ENCODE measurements at regions of chr2 and their contacts with region 1.

Region 1: GRCh38 chr2:217090024-217090473 is 230.2 kb upstream of the TNP1 start:
- DNase-seq: no peak
- H3K4me3 Mint-ChIP-seq: peak overlapping the region; percentile 40
- H3K27ac Mint-ChIP-seq: peak overlapping the region; percentile 26
- H3K4me1 Mint-ChIP-seq: peaks cover 54% of the 10 kb centered on the region
- H3K27me3 Mint-ChIP-seq: peaks cover 9% of the 10 kb centered on the region

Region 2: DNA sequence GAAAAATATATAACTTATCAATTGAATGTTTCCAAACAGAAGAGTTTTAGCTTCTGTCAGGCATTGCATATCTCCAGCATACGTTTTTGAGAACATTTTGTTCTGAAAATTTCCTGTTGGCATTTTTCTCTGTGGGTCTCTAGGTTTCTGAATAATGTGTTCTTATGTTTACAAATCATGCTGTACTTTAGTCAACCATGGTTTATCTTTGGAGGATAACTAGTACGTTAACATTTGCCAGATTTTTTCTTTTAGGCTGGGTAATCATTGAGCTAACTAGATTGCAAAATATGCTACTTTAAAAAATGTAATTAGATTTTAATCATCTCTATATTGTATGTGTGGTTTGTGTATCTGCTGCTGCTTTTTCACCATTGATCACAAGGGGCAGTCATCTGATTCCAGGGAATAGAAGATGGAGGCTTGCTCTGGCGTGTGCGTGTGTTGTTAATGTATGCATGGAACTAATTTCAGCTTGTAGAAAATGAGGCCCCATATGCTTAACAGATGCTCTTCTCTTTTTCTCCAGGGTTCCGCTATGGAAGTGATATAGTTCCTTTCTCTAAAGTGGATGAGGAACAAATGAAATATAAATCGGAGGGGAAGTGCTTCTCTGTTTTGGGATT is 959.6 kb before region 1 on chr2:
- intact Hi-C with region 1: no loop called
- DNase-seq: no peak
- H3K4me3 Mint-ChIP-seq: no peak overlapping the region
- H3K27ac Mint-ChIP-seq: peak overlapping the region; percentile 31
- H3K4me1 Mint-ChIP-seq: peaks cover 59% of the 10 kb centered on the region
- H3K27me3 Mint-ChIP-seq: no peaks in the 10 kb centered on the region

Region 3: DNA sequence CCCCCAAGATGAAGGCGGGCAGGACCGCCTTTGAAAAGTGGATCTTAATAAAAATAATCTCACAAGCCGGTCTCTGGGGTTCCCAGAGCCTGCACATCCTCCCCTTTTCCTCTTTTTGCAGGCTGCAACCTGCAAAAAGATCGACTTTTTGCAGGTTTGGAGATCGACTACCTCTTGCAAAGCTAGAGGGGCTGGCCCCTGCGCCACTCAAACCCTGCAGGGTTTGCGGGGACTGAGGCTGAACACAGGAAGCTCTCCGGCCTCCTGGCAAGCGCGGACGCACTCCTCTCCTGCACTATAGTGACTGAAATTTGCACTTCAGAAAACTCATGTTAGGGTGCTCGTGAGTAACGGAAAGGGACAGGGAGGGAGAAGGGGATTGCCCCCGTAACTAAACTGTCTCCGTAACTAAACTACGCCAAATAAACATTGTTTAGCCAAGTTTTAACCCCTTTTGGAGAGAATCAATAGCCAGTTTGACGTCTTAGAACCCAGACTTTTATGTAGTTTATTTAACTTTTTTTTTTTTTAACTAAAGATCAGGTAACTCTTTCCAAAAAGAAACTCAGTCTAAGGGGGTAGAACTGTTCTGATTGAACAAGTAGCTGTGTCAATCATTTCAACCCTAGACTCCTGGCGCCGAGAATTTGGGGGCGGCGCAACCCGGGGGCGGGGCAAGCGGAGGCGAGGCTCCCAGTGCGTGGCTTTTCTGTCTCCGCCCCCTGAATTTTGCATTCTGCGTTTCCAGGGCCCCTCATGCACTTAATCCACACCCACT is 397.2 kb before region 1 on chr2:
- intact Hi-C with region 1: loop called (anchors 5 kb)
- DNase-seq: peak; percentile 65
- H3K4me3 Mint-ChIP-seq: peak overlapping the region; percentile 83
- H3K27ac Mint-ChIP-seq: peak overlapping the region; percentile 68
- H3K4me1 Mint-ChIP-seq: peaks cover 25% of the 10 kb centered on the region
- H3K27me3 Mint-ChIP-seq: peaks cover 66% of the 10 kb centered on the region

Region 4: GRCh38 chr2:216857131-216857550 is 232.9 kb before region 1 on chr2:
- intact Hi-C with region 1: loop called (anchors 1 kb)
- DNase-seq: peak; percentile 29
- H3K4me3 Mint-ChIP-seq: no peak overlapping the region
- H3K27ac Mint-ChIP-seq: peak overlapping the region; percentile 88
- H3K4me1 Mint-ChIP-seq: peaks cover 45% of the 10 kb centered on the region
- H3K27me3 Mint-ChIP-seq: no peaks in the 10 kb centered on the region

Region 5: DNA sequence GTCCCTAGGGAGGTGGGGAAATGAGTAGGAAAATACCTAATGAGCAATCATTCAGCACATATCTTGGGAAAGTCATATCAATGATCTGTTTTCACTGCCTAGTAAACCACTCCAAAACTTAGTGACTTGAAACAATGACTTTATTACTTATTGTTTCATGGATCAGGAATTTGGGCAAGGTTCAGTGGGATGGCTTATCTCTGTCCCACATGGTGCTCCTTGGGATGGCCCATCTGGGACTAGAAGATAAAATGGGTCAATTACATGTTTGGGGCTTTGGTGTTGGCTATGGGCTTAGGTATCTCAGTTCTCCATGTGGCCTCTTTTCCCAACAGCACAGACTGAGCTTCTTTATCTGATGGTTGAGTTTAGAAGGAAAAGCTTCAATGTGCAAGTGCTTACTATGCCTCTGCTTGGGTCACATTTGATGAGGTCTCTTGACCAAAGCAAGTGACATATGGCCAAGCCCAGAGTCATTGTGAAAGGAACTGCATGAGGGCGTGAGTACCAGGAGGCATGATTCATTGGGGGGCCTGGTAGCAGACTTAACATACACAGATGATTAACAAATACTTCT is 12.1 kb before region 1 on chr2:
- intact Hi-C with region 1: loop called (anchors 1 kb)
- DNase-seq: no peak
- H3K4me3 Mint-ChIP-seq: no peak overlapping the region
- H3K27ac Mint-ChIP-seq: no peak overlapping the region
- H3K4me1 Mint-ChIP-seq: peaks cover 6% of the 10 kb centered on the region
- H3K27me3 Mint-ChIP-seq: peaks cover 10% of the 10 kb centered on the region

Region 6: GRCh38 chr2:217105733-217106649 is 15.9 kb after region 1 on chr2:
- intact Hi-C with region 1: loop called (anchors 2 kb)
- DNase-seq: no peak
- H3K4me3 Mint-ChIP-seq: no peak overlapping the region
- H3K27ac Mint-ChIP-seq: no peak overlapping the region
- H3K4me1 Mint-ChIP-seq: peaks cover 19% of the 10 kb centered on the region
- H3K27me3 Mint-ChIP-seq: peaks cover 13% of the 10 kb centered on the region

Region 7: GRCh38 chr2:217186668-217187159 is 96.7 kb after region 1 on chr2:
- intact Hi-C with region 1: no loop called
- DNase-seq: no peak
- H3K4me3 Mint-ChIP-seq: no peak overlapping the region
- H3K27ac Mint-ChIP-seq: no peak overlapping the region
- H3K4me1 Mint-ChIP-seq: peaks cover 2% of the 10 kb centered on the region
- H3K27me3 Mint-ChIP-seq: peaks cover 7% of the 10 kb centered on the region

Measured in activated T-helper 2 cell treated with anti-CD3 and anti-CD28 coated beads, Interferon-gamma antibody, Interleukin-2, Interleukin-4, amounts not matched to agents 10 μg/mL and 5 μg/mL and 100 μg/mL, durations not matched to agents 14 hours and 24 hours and 36 hours (primary cell).